Transverse colon (tissue), 4 donors: ENCODE measurements at regions of chrX and their contacts with region 1.

Region 1: DNA sequence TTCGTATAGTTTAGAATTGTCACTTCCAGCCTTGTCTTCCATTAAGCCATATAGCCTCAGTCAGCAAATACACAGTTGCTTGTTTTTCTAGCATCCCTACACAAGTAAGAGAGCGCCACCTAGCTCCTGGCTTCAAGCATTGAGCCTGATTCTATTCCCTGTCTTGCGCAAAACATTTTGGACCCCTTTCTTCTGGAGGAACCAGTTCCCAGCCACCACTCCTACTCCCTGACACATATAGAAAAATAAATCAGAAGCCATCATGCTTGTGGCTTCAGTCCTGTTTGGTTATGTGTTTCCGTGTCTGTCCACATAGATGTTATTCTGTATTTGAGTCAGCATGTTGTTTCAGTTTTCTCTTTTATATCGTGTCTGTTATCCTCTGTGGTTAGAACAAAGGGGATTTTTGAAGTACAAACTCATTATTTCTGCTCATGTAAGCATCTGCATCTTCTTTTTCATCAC is 59.9 kb downstream of the GK start:
- DNase-seq: peak; percentile 46
- H3K4me3 ChIP-seq: no peak overlapping the region
- H3K27ac ChIP-seq: no peak overlapping the region
- H3K4me1 ChIP-seq: no peaks in the 10 kb centered on the region
- H3K27me3 ChIP-seq: no peaks in the 10 kb centered on the region
- CTCF ChIP-seq: peak; percentile 44 to 57 (median 55)
- EP300 ChIP-seq: no peak
- POLR2A ChIP-seq: no peak

Region 2: GRCh38 chrX:30570505-30570904 is 142.6 kb before region 1 on chrX:
- in situ Hi-C with region 1: loop called in 3 of 4 experiments (anchors 10 to 25 kb)
- intact Hi-C with region 1: loop called (anchors 10 kb)
- DNase-seq: no peak
- H3K4me3 ChIP-seq: no peak overlapping the region
- H3K27ac ChIP-seq: no peak overlapping the region
- H3K4me1 ChIP-seq: no peaks in the 10 kb centered on the region
- H3K27me3 ChIP-seq: no peaks in the 10 kb centered on the region
- CTCF ChIP-seq: peak; percentile 30 to 60 (median 45)
- EP300 ChIP-seq: no peak
- POLR2A ChIP-seq: no peak

Region 3: DNA sequence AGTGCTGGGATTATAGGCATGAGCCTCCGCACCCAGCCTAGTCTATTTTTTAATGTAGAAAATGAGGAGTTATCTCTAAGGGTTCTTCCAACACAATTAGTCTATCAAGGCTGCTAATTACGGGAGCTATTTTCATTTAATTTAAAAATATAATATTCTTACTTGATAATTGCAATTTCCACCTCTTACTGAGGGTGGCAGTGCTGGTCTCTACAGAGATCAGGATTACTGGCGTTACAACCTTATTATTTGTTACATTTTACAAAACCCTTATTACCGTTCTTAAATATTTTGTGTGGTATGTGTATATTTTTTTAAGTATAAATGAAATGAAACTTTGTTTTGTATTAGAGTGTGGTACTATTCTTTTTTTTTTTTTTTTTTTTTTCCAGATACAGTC is 77.5 kb before region 1 on chrX:
- in situ Hi-C with region 1: loop called in 2 of 4 experiments (anchors 10 kb)
- intact Hi-C with region 1: no loop called
- DNase-seq: no peak
- H3K4me3 ChIP-seq: no peak overlapping the region
- H3K27ac ChIP-seq: no peak overlapping the region
- H3K4me1 ChIP-seq: no peaks in the 10 kb centered on the region
- H3K27me3 ChIP-seq: no peaks in the 10 kb centered on the region
- CTCF ChIP-seq: peak; percentile 22 to 44 (median 37)
- EP300 ChIP-seq: no peak
- POLR2A ChIP-seq: no peak

Region 4: DNA sequence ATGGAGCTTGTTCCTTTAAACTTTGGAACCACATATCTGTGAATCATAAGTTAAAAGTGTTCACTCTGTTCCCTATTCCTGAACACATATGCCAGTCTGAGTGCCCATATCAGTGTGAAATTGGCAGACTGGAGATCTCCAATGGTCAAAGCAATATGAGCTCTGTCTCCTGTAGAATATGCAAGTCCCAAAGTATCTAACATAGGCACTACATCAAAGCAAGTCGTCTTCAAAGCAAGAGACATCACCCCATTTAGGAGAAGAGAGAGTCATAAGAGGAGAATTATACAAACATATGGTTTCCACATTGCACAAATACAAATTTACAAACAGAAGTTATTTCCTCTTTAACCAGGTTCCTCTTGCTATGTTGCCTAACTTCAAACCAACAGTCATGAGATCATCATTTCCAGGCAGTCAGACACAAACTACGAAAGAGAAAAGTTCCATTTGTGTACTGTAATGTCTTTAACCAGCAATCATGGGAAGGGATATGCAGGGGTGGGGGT is 69.7 kb before region 1 on chrX:
- in situ Hi-C with region 1: loop called in 2 of 4 experiments (anchors 10 kb)
- intact Hi-C with region 1: no loop called
- DNase-seq: no peak
- H3K4me3 ChIP-seq: no peak overlapping the region
- H3K27ac ChIP-seq: no peak overlapping the region
- H3K4me1 ChIP-seq: no peaks in the 10 kb centered on the region
- H3K27me3 ChIP-seq: no peaks in the 10 kb centered on the region
- CTCF ChIP-seq: no peak
- EP300 ChIP-seq: no peak
- POLR2A ChIP-seq: no peak